WTC11 (cell line): ENCODE measurements at regions of chr19 and their contacts with region 1.

Region 1: DNA sequence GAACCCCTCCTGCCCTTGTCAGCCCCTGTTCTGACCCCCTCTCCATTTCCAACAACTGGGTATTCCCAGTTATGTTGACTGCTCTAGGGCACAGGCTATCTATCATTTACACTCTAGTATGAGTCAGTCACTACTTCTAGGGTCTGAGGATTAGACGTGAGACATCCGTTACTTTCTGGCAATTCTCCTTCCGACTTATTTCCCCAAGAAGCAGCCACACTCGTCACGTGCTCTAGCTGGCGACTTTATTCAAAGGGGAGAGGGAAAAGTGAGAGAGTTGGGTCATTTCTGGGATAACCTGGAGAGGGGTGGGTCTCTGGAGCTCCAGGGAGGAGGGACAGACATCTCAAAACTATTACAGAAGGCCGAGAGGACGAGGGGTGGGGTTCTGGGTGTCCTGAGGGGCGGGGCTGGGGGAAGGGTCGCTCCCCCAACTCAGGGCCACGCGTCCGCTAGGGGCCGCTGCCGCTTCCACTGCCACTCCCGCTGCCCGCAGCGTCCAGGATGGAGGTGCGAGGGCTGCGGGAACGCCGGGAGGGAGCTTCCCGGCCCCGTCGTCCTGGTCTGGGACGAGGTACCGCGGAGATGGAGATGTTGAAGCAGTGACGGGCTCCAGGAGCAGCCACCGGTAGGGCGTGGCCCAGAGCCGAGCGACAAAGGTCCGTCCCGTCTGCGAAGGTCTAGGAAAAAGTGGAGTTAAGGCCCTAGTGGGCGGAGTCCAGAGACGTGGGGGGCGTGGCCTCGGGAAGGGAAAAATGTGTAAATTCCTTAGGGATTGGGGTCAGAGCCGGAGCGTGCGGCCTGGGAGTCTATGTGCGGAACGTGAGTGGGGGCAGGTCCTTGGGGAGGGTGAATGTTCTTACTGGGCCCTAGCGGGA is 8.9 kb downstream of the RTBDN start:
- DNase-seq: peak; percentile 94
- ATAC-seq: peak; percentile 85
- H3K4me3 Mint-ChIP-seq: peak overlapping the region; percentile 77
- H3K27ac Mint-ChIP-seq: peak overlapping the region; percentile 89
- H3K4me1 Mint-ChIP-seq: peaks cover 21% of the 10 kb centered on the region
- H3K27me3 Mint-ChIP-seq: peaks cover 31% of the 10 kb centered on the region
- CTCF ChIP-seq: peak; percentile 60

Region 2: GRCh38 chr19:12777217-12778016 is 48.1 kb before region 1 on chr19:
- CTCF ChIA-PET with region 1: interaction called, 15 read pairs
- POLR2A ChIA-PET with region 1: no interaction called
- DNase-seq: peak; percentile 91
- ATAC-seq: peak; percentile 39
- H3K4me3 Mint-ChIP-seq: peak overlapping the region; percentile 79
- H3K27ac Mint-ChIP-seq: peak overlapping the region; percentile 49
- H3K4me1 Mint-ChIP-seq: peaks cover 21% of the 10 kb centered on the region
- H3K27me3 Mint-ChIP-seq: no peaks in the 10 kb centered on the region; the same call in 1 of the 2 replicates
- CTCF ChIP-seq: peak; percentile 74

Region 3: GRCh38 chr19:12796146-12797071 is 29.1 kb before region 1 on chr19:
- CTCF ChIA-PET with region 1: interaction called, 13 read pairs
- POLR2A ChIA-PET with region 1: no interaction called
- DNase-seq: peak; percentile 86
- ATAC-seq: peak; percentile 67
- H3K4me3 Mint-ChIP-seq: peak overlapping the region; percentile 43; the same call in 1 of the 2 replicates
- H3K27ac Mint-ChIP-seq: peak overlapping the region; percentile 96
- H3K4me1 Mint-ChIP-seq: peaks cover 26% of the 10 kb centered on the region
- H3K27me3 Mint-ChIP-seq: peaks cover 25% of the 10 kb centered on the region
- CTCF ChIP-seq: peak; percentile 84

Region 4: DNA sequence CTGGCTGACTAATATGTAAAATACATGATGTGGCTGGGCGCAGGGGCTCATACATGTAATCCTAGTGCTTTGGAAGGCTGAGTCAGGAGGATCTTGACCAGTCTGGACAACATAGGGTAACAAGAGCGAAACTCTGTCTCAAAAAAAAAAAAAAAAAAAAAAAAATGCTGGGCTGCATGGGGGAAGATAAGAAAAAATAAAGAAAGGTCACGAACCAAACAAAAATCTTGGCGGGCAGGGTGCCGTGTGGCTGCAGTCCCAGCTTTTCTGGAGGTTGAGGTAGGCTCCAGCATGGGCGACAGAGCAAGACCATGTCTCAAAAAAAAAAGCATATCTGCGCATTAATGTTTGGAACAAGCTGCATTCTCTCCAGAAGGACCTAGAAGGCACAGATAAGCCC is 10.4 kb before region 1 on chr19:
- CTCF ChIA-PET with region 1: interaction called, 11 read pairs
- POLR2A ChIA-PET with region 1: no interaction called
- DNase-seq: no peak
- ATAC-seq: no peak
- H3K4me3 Mint-ChIP-seq: no peak overlapping the region
- H3K27ac Mint-ChIP-seq: no peak overlapping the region
- H3K4me1 Mint-ChIP-seq: no peaks in the 10 kb centered on the region
- H3K27me3 Mint-ChIP-seq: no peaks in the 10 kb centered on the region
- CTCF ChIP-seq: no peak

Region 5: DNA sequence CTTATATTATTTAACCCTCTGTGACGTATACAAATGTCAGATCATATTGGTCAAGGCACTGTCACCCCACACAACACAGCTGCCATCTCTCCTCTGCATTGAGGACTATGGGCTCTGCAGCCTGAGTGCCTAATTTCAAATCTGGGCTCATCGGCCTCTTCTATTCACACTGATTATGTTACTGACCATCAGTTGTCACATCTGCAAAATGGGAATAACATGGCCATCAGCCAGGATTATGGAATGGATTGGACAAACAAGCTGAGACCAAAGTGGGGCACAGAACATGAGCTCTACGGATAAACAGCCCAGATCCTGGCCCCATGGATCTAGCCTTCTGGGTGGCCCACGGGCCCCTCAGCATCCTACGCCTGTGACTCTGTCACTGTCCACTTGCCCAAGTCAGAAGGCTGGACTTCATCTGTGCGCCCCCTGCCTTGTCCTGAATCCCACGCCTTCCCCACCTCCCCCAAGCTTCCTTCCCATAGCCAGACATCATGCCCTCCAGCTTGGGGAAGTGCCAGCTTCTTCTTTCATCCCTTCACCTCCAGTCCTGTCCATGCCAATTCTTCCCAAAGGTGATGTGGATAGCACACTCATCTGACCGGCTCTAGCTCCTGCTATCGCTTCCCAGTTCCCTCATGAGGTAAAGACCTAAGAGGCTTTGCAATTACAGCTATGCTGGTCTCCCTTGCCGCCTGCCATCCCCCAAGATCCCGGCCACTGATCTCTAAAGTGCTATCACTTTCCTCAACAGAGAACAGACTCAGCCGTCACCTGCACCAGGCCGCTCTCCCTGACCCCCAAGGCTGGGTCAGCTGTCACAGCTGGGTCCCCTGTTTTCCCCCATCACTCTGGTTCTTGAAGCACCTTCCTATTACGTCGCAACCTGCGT is 107.1 kb after region 1 on chr19:
- CTCF ChIA-PET with region 1: no interaction called
- POLR2A ChIA-PET with region 1: no interaction called
- DNase-seq: no peak
- ATAC-seq: no peak
- H3K4me3 Mint-ChIP-seq: peak overlapping the region; percentile 99
- H3K27ac Mint-ChIP-seq: peak overlapping the region; percentile 89
- H3K4me1 Mint-ChIP-seq: peaks cover 27% of the 10 kb centered on the region
- H3K27me3 Mint-ChIP-seq: no peaks in the 10 kb centered on the region
- CTCF ChIP-seq: no peak